ENCODE measurements at regions of chr11 and their contacts with region 1.

Region 1: GRCh38 chr11:77195171-77195751 is 67.2 kb downstream of the MYO7A start:
- DNase-seq: no peak

Region 2: DNA sequence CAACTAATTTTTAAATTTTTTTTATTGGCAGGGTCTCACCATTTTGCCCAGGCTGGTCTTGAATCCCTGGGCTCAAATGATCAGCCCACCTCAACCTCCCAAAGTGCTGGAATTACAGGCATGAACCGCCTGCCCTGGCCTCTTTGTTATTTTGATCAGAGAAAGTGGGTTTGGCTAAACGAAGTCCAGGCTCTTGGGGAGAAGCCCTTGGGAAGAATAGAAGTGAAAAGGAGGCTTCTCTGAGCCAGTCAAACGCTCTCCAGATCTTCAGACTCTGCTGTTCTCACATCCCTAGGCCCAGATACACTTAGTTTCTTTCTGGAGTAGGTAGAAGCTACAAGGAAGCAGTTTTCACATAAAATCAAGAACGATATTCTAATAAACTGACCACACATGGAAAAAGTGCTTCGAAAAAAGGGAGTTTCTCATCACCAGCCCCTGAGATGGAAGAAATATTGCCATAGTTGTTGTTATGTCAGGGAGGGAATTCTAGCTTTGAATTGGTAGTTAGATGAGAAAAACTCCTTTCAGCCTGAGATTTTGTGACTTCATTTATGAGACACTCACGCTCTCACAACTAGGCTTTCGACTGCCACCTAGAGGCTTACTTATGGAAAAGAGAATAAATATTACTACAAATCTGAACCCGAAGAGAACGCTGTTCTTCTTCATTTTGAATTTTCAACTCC is 352.7 kb after region 1 on chr11:
- intact Hi-C with region 1: loop called (anchors 2 kb)
- DNase-seq: no peak

Measured in cardiac septum (tissue), 1 donor.